BJ (cell line): ENCODE measurements at regions of chr20 and their contacts with region 1.

Region 1: GRCh38 chr20:31560094-31560899 is 44.8 kb upstream of the ID1 start:
- DNase-seq: peak; percentile 51
- H3K4me3 ChIP-seq: no peak overlapping the region
- H3K27me3 ChIP-seq: no peaks in the 10 kb centered on the region
- CTCF ChIP-seq: peak; percentile 93

Region 2: GRCh38 chr20:31547017-31547675 is 13.2 kb before region 1 on chr20:
- CTCF ChIA-PET with region 1: interaction called, 162 read pairs
- POLR2A ChIA-PET with region 1: interaction called, 3 read pairs
- DNase-seq: peak; percentile 42
- H3K4me3 ChIP-seq: peak overlapping the region; percentile 36
- H3K27me3 ChIP-seq: no peaks in the 10 kb centered on the region
- CTCF ChIP-seq: peak; percentile 18; the same call in 1 of the 2 replicates

Region 3: GRCh38 chr20:31587545-31588389 is 27.5 kb after region 1 on chr20:
- CTCF ChIA-PET with region 1: interaction called, 14 read pairs
- POLR2A ChIA-PET with region 1: no interaction called
- DNase-seq: no peak
- H3K4me3 ChIP-seq: peak overlapping the region; percentile 44
- H3K27me3 ChIP-seq: no peaks in the 10 kb centered on the region
- CTCF ChIP-seq: no peak

Region 4: DNA sequence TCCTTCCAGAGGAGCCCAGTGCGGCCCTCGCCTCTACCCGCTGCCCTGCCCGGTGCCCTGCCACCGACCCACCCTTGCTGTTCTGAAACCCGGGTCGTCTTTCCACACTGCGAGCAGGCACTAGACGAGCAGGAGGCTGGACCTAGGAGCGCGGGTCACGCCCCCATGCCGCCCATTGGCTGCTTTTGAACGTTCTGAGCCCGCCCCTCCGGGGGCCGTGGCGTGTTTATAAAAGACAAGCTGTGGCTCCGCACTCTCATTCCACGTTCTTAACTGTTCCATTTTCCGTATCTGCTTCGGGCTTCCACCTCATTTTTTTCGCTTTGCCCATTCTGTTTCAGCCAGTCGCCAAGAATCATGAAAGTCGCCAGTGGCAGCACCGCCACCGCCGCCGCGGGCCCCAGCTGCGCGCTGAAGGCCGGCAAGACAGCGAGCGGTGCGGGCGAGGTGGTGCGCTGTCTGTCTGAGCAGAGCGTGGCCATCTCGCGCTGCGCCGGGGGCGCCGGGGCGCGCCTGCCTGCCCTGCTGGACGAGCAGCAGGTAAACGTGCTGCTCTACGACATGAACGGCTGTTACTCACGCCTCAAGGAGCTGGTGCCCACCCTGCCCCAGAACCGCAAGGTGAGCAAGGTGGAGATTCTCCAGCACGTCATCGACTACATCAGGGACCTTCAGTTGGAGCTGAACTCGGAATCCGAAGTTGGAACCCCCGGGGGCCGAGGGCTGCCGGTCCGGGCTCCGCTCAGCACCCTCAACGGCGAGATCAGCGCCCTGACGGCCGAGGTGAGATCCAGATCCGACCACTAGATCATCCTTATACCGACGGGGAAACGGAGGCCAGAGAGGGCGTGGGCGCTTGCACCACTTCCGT is 45.0 kb after region 1 on chr20 and contains the start of gene ID1:
- CTCF ChIA-PET with region 1: interaction called, 667 read pairs
- POLR2A ChIA-PET with region 1: interaction called, 3 read pairs
- DNase-seq: peak; percentile 70
- H3K4me3 ChIP-seq: peak within 1 kb of the TSS; percentile 76
- H3K27me3 ChIP-seq: no peaks in the 10 kb centered on the region
- CTCF ChIP-seq: no peak
- polyA plus RNA-seq, gene ID1: 126 and 135 TPM in 2 replicates

Region 5: DNA sequence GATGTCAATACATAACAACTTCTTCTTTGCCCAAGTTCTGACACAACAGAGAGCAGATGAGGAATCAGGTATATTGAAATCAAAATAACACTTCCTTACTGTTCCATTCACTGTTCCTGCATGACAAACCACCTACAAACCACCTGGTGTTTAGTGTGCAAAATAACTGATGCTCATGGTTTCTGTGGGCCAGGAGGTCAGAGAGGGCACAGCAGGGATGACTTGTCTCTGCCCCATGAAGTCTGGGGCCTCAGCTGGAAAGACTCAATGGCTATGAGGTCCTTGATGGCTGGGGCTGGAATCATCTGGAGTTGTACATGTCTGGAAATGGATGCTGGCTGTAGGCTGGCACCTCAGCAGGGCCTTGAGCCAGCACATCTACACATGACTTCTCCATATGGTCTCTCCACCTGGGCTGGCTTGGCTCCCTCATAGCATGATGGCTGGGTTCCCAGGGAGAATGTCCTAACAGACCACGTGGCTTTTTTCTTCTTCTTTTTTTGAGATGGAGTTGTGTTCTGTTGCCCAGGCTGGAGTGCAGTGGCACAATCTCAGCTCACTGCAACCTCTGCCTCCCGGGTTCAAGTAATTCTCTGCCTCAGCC is 70.0 kb after region 1 on chr20:
- CTCF ChIA-PET with region 1: interaction called, 13 read pairs
- POLR2A ChIA-PET with region 1: interaction called, 3 read pairs
- DNase-seq: no peak
- H3K4me3 ChIP-seq: no peak overlapping the region
- H3K27me3 ChIP-seq: no peaks in the 10 kb centered on the region
- CTCF ChIP-seq: no peak